CD4-positive, alpha-beta T cell (primary cell): ENCODE measurements at regions of chr15 and their contacts with region 1.

Region 1: GRCh38 chr15:35458176-35458856 is 87.6 kb downstream of the DPH6 start:
- DNase-seq: no peak
- ATAC-seq: no peak
- H3K4me3 ChIP-seq: no peak overlapping the region
- H3K4me3 Mint-ChIP-seq: no peak overlapping the region
- H3K27ac ChIP-seq: no peak overlapping the region
- H3K27ac Mint-ChIP-seq: no peak overlapping the region
- H3K4me1 ChIP-seq: no peaks in the 10 kb centered on the region
- H3K4me1 Mint-ChIP-seq: no peaks in the 10 kb centered on the region
- H3K27me3 ChIP-seq: no peaks in the 10 kb centered on the region
- H3K27me3 Mint-ChIP-seq: no peaks in the 10 kb centered on the region
- CTCF ChIP-seq: no peak

Region 2: GRCh38 chr15:37219211-37219701 is 1760.9 kb after region 1 on chr15:
- CTCF ChIA-PET with region 1: no interaction called
- POLR2A ChIA-PET with region 1: no interaction called
- intact Hi-C with region 1: loop called in 1 of 2 experiments (anchors 5 kb)
- DNase-seq: no peak
- ATAC-seq: no peak
- H3K4me3 ChIP-seq: no peak overlapping the region
- H3K4me3 Mint-ChIP-seq: no peak overlapping the region
- H3K27ac ChIP-seq: no peak overlapping the region
- H3K27ac Mint-ChIP-seq: no peak overlapping the region
- H3K4me1 ChIP-seq: no peaks in the 10 kb centered on the region
- H3K4me1 Mint-ChIP-seq: no peaks in the 10 kb centered on the region
- H3K27me3 ChIP-seq: no peaks in the 10 kb centered on the region
- H3K27me3 Mint-ChIP-seq: no peaks in the 10 kb centered on the region
- CTCF ChIP-seq: no peak